OCI-LY7 (cell line): ENCODE measurements at regions of chr7 and their contacts with region 1.

Region 1: GRCh38 chr7:134646425-134647305 is at the start of gene BPGM:
- DNase-seq: peak; percentile 99
- H3K4me3 ChIP-seq: peak within 1 kb of the TSS; percentile 90
- H3K27ac ChIP-seq: peak within 1 kb of the TSS; percentile 76
- H3K4me1 ChIP-seq: peaks cover 39% of the 10 kb centered on the region
- CTCF ChIP-seq: peak; percentile 63
- total RNA-seq, gene BPGM: 18.7 and 23.5 TPM in 2 replicates

Region 2: GRCh38 chr7:134632937-134633540 is 13.6 kb before region 1 on chr7:
- CTCF ChIA-PET with region 1: interaction called, 7 read pairs
- POLR2A ChIA-PET with region 1: interaction called, 81 read pairs
- intact Hi-C with region 1: no loop called
- DNase-seq: peak; percentile 61
- H3K4me3 ChIP-seq: no peak overlapping the region
- H3K27ac ChIP-seq: no peak overlapping the region
- H3K4me1 ChIP-seq: no peaks in the 10 kb centered on the region
- CTCF ChIP-seq: peak; percentile 86

Region 3: GRCh38 chr7:134669845-134670373 is 23.2 kb after region 1 on chr7:
- CTCF ChIA-PET with region 1: no interaction called
- POLR2A ChIA-PET with region 1: interaction called, 29 read pairs
- intact Hi-C with region 1: no loop called
- DNase-seq: peak; percentile 10
- H3K4me3 ChIP-seq: no peak overlapping the region
- H3K27ac ChIP-seq: no peak overlapping the region
- H3K4me1 ChIP-seq: peaks cover 16% of the 10 kb centered on the region
- CTCF ChIP-seq: no peak

Region 4: GRCh38 chr7:134986363-134987251 is 339.9 kb after region 1 on chr7 and contains the start of gene AGBL3:
- CTCF ChIA-PET with region 1: no interaction called
- POLR2A ChIA-PET with region 1: interaction called, 16 read pairs
- intact Hi-C with region 1: loop called (anchors 2 kb)
- DNase-seq: peak; percentile 94
- H3K4me3 ChIP-seq: peak within 1 kb of the TSS; percentile 95
- H3K27ac ChIP-seq: peak within 1 kb of the TSS; percentile 49
- H3K4me1 ChIP-seq: peaks cover 4% of the 10 kb centered on the region
- CTCF ChIP-seq: peak; percentile 81
- total RNA-seq, gene AGBL3: 3.5 and 5.3 TPM in 2 replicates

Region 5: DNA sequence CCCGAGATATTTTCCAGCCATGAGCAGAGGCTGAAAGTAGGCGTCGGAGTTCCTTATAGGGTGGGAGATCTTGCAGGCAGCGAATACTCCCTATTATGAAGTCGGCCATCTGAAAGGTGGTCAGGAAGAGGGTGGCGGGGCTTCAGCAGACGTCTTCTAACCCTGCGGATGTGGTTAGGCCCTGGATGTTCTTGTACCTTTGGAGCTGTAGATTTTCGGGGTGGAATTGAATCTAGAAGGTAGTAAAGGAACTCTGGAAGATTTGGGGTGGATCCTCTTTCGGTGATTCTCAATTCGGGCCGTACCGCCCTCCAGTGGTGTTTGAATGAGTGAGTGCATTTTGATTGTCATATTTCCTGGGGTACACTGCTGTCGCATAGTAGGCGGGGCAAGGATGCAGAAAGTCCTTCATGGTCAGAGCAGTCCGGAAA is 911.7 kb after region 1 on chr7:
- CTCF ChIA-PET with region 1: no interaction called
- POLR2A ChIA-PET with region 1: no interaction called
- intact Hi-C with region 1: loop called (anchors 5 kb)
- DNase-seq: peak; percentile 85
- H3K4me3 ChIP-seq: peak overlapping the region; percentile 97
- H3K27ac ChIP-seq: peak overlapping the region; percentile 92
- H3K4me1 ChIP-seq: peaks cover 41% of the 10 kb centered on the region
- CTCF ChIP-seq: peak; percentile 89